CD8-positive, alpha-beta T cell (primary cell): ENCODE measurements at regions of chr1 and their contacts with region 1.

Region 1: DNA sequence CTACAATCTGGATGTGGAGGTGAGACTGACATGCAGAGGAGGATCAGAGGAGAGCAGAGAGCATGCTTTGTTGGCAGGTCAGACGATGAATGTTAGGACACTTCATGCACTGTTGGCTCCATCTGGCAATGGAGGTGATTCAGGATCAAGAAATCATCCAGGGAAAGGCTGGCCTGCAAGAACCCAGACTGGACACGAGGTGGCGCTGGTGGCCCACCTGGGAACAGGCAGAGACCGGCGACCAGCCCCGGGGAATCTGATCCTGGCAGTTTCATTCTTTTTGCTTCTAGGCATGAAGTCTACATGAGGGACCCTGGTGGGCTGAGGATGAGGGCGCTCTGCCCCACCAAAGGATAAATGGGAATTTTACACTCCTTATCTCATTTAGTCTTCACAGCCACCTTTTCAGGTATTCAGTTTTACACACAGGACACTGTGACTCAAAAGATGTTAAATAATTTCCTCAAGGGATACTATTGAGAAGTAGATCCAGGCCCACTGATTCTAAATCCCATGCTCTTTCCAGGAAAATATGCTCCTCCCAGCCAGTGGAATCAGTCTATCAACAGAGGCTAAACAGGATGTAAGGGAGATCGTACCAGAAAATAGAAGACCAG is 26.2 kb upstream of the SCMH1 start:
- DNase-seq: peak; percentile 29 to 80 (median 70)
- ATAC-seq: peak; percentile 67
- H3K4me3 ChIP-seq: no peak overlapping the region
- H3K4me3 Mint-ChIP-seq: no peak overlapping the region
- H3K27ac ChIP-seq: no peak overlapping the region
- H3K27ac Mint-ChIP-seq: no peak overlapping the region
- H3K4me1 ChIP-seq: no peaks in the 10 kb centered on the region
- H3K4me1 Mint-ChIP-seq: no peaks in the 10 kb centered on the region
- H3K27me3 ChIP-seq: no peaks in the 10 kb centered on the region
- H3K27me3 Mint-ChIP-seq: peaks cover 2% of the 10 kb centered on the region
- CTCF ChIP-seq: peak; percentile 96

Region 2: DNA sequence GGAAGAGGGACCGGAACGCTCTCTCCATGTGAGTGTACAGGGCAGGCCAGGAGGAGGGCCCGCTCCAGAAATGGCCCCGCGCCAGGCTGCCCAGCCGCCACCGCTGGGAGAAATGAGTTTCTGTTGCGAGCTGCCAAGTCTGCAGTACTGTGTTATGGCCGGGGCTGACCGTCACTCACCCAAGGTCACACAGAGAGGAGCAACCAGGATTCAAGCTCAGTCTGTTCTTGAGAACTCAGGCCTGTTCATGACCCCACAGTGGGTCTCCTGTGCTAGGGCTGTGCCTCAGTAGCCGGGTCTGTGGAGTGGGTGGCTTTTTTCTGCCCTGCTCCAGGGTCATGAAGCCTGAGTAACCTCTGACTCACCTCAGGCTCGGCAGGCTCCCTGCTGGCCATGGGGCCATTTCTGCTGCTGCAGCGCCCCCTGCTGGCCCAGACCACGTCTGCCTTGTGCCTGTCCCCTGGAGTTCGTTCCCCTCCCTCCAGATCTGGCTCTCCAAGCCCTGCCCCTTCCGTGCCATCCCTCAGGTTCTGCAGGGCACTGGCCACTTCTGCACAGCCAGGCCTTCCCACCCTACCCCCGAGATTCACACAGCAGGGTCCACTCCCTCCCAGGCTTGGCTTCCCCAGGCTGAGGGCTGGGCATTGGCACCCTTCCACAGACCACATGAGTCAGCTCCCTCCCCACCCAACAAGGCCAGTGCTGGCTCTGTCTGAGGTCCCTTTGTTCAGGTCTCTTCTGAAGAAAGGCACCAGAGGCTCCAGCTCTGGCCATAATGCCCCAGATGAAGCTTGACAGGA is 164.4 kb after region 1 on chr1:
- CTCF ChIA-PET with region 1: interaction called, 5 read pairs
- POLR2A ChIA-PET with region 1: no interaction called
- intact Hi-C with region 1: loop called (anchors 1 kb)
- DNase-seq: peak; percentile 45 to 76 (median 64)
- ATAC-seq: peak; percentile 40
- H3K4me3 ChIP-seq: no peak overlapping the region
- H3K4me3 Mint-ChIP-seq: no peak overlapping the region
- H3K27ac ChIP-seq: no peak overlapping the region
- H3K27ac Mint-ChIP-seq: no peak overlapping the region
- H3K4me1 ChIP-seq: no peaks in the 10 kb centered on the region
- H3K4me1 Mint-ChIP-seq: no peaks in the 10 kb centered on the region
- H3K27me3 ChIP-seq: no peaks in the 10 kb centered on the region
- H3K27me3 Mint-ChIP-seq: peaks cover 31% of the 10 kb centered on the region
- CTCF ChIP-seq: peak; percentile 53